MCF 10A (cell line): ENCODE measurements at regions of chr1 and their contacts with region 1.

Region 1: GRCh38 chr1:247746486-247746885 is 1.5 kb downstream of the OR14A2 start:
- DNase-seq: peak; percentile 77
- H3K4me3 Mint-ChIP-seq: no peak overlapping the region
- H3K27ac Mint-ChIP-seq: peak overlapping the region; percentile 72
- H3K4me1 Mint-ChIP-seq: peaks cover 36% of the 10 kb centered on the region
- H3K27me3 Mint-ChIP-seq: no peaks in the 10 kb centered on the region
- CTCF ChIP-seq: no peak

Region 2: DNA sequence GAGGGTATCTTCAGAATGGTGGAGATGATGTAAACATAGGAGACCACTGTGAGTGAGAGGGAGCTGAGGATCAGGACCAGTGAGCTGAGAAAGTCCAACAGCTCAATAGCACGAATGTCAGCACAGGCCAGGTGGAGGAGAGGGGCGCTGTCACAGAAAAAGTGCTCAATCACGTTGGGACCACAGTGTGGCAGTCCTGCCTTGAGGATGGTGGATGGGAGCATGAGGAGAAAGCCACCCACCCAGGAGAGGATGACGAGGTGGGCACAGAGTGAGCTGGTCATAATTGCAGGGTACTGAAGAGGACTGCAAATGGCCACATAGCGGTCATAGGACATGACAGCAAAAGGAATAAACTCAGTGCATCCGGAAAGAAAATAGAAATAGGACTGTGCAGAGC is 87.1 kb after region 1 on chr1:
- CTCF ChIA-PET with region 1: no interaction called
- POLR2A ChIA-PET with region 1: no interaction called
- intact Hi-C with region 1: no loop called
- DNase-seq: no peak
- H3K4me3 Mint-ChIP-seq: no peak overlapping the region
- H3K27ac Mint-ChIP-seq: no peak overlapping the region
- H3K4me1 Mint-ChIP-seq: no peaks in the 10 kb centered on the region
- H3K27me3 Mint-ChIP-seq: no peaks in the 10 kb centered on the region
- CTCF ChIP-seq: no peak

Region 3: GRCh38 chr1:247906504-247907047 is 160.1 kb after region 1 on chr1:
- CTCF ChIA-PET with region 1: no interaction called
- POLR2A ChIA-PET with region 1: no interaction called
- intact Hi-C with region 1: loop called (anchors 2 kb)
- DNase-seq: peak; percentile 79
- H3K4me3 Mint-ChIP-seq: peak overlapping the region; percentile 79
- H3K27ac Mint-ChIP-seq: peak overlapping the region; percentile 99
- H3K4me1 Mint-ChIP-seq: peaks cover 20% of the 10 kb centered on the region
- H3K27me3 Mint-ChIP-seq: no peaks in the 10 kb centered on the region
- CTCF ChIP-seq: no peak